Left ventricle myocardium inferior (tissue), 1 donor: ENCODE measurements at regions of chr1 and their contacts with region 1.

Region 1: DNA sequence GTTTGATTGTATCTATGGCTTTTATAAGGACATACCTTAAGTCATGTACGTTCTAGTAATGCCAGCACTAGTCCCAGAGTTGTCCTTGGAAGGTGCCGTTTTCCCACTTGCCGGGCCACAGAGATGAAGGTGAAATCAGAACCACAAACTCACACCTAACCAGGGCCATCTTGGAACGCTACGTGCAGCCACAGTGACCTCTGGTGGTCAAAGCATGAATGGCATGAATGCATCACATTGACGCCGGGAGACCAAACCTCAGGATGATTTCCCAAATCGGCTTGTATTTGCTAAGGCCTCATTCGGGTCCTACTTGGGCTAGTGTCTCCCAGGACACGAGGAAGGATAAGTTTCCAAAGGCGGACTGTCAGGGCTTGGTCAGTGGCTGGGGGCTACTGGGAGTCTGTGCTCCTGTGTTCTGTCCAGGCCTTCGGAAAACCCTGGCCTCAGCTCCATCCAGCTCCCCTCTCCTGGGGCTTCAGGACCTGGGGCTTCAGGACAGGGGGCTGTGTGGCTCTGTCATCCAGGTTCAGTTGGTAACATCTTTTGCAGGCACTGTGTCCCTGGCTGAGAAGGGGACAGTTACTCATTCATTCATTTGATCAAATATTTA is 260.5 kb downstream of the PRDM2 start:
- DNase-seq: peak; percentile 48
- H3K4me3 ChIP-seq: no peak overlapping the region
- H3K27ac ChIP-seq: no peak overlapping the region
- H3K4me1 ChIP-seq: no peaks in the 10 kb centered on the region
- H3K27me3 ChIP-seq: peaks cover 60% of the 10 kb centered on the region
- CTCF ChIP-seq: peak; percentile 98

Region 2: GRCh38 chr1:13667691-13668090 is 292.8 kb before region 1 on chr1:
- intact Hi-C with region 1: loop called (anchors 5 kb)
- DNase-seq: no peak
- H3K4me3 ChIP-seq: no peak overlapping the region
- H3K27ac ChIP-seq: no peak overlapping the region
- H3K4me1 ChIP-seq: no peaks in the 10 kb centered on the region
- H3K27me3 ChIP-seq: peaks cover 15% of the 10 kb centered on the region
- CTCF ChIP-seq: no peak